ENCODE measurements at regions of chr1 and their contacts with region 1.

Region 1: DNA sequence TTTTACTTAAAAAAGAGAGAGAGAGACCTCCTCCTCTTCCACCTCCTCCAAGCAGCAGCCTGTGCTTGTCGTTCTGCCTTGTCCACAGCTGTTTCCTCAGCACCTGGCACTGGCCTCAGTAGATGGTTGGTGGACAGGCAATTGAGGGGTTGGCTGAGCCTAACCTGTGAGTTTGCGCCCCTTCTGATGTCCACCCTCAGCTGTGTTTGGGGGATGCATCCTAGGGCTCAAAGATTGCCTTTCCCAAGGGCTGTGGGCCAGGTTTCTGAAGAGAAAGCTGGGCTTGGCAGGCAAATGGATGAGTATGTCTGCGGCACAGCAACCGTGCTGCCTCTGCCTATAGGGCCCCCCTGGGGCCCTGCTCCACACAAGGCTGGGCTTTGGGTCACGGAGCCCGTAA is 35.1 kb upstream of the KDM4A start:
- DNase-seq: no peak
- ATAC-seq: no peak
- H3K4me3 ChIP-seq: no peak overlapping the region
- H3K27ac ChIP-seq: no peak overlapping the region
- H3K4me1 ChIP-seq: no peaks in the 10 kb centered on the region
- H3K27me3 ChIP-seq: no peaks in the 10 kb centered on the region
- CTCF ChIP-seq: no peak
- POLR2A ChIP-seq: no peak
- RAD21 ChIP-seq: no peak

Region 2: DNA sequence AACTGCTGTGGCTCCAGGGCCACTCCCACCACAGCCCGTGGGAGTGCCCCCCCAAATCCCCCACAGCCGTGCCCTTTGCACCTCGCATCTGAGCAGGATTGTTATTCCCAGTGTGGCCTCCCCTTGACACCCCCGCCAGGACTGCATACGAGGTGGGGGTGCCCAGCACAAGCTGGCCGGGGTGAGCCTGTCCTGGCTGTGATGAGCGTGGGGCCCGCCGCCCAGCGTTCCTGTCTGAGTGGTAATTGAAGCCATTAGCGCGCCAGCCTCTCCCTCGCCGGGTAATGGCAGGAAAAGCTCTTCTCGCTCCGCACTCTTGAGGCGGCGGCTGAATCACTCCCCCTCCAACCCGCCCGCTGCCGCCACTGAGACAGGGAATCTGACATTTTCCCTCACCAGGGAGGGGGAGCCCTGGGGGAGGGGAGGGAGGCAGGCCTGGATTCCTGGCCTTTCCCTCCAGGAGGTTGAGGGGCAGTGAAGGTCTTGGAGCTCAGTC is 56.5 kb before region 1 on chr1:
- CTCF ChIA-PET with region 1: interaction called, 4 read pairs
- POLR2A ChIA-PET with region 1: interaction called, 11 read pairs
- dilution Hi-C with region 1: no loop called
- in situ Hi-C with region 1: no loop called
- intact Hi-C with region 1: no loop called
- DNase-seq: peak; percentile 42
- ATAC-seq: peak; percentile 83
- H3K4me3 ChIP-seq: no peak overlapping the region
- H3K27ac ChIP-seq: peak overlapping the region; percentile 14
- H3K4me1 ChIP-seq: peaks cover 12% of the 10 kb centered on the region
- H3K27me3 ChIP-seq: no peaks in the 10 kb centered on the region
- CTCF ChIP-seq: no peak
- POLR2A ChIP-seq: no peak
- RAD21 ChIP-seq: no peak